Right cardiac atrium (tissue), 5 donors: ENCODE measurements at regions of chr12 and their contacts with region 1.

Region 1: DNA sequence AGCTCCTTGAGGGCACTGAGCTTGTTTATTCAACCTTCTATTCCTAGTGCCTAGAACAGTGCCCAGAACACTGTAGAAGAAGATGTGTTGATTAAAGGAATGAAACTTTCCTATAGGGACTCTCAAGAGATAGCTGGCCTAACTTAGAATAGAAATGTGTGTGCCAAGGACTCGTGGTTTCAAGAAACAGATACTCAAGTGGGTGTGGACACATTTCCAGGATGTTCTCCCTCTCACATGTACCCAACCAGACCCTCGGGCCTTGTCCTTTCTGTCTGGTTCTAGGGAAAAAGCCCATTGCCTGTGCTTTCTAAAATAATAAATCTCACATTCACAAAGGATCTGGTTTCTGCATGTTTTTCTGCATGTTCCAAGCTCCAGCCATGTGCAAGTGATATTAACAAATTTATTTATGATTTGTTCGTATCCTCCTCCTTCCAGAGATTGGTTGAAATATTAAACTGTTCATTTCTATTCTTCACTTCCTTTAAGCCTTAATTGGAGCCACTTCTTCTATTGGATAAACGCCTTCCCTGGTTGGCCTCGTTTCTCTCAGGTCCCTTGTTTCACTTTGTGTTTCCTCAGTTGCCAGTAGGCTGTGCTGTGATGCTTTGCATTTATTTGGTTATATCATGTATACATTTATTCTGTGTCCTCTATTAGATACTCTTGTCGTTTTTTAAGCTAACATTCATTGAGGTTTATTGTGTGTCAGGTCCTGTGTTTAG is 89.8 kb downstream of the CRADD start:
- DNase-seq: no peak
- ATAC-seq: peak; percentile 81 to 83
- H3K4me3 ChIP-seq: no peak overlapping the region
- H3K27ac ChIP-seq: peak overlapping the region; percentile 17
- H3K4me1 ChIP-seq: peaks cover 11% of the 10 kb centered on the region
- H3K27me3 ChIP-seq: no peaks in the 10 kb centered on the region

Region 2: DNA sequence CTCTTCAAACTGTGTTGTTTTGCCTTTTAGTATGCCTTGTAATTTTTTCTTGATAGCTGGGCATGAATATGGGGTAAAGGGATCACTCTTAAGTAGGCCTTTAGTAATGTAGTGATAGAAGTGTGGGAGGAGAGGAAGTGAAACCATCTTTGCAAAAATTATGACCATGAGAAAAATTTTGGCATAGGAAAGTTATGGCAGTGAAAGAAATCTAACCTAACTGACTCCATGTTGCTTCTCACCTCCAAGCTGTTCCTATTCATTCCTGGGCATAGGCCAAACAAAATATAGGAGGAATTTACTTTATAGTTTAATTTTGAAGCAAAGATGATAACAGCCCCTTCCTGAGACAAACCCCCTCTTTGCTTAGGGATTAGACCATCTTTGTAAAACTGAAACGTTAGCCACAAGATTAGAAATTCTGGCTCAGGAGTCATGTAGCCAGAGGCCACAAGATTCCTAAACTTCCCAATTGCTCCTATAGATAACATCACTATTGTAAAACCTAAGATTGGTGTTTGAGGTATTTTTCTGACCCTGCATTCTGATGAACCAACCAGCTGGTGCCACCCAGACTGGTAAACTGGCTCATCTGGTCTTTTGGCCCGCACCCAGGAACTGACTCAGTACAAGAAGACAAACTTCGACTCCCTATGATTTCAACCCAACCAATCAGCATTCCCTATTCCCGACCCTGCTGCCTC is 44.0 kb before region 1 on chr12:
- intact Hi-C with region 1: no loop called
- DNase-seq: peak in 1 of 3 donors; percentile 50
- ATAC-seq: no peak
- H3K4me3 ChIP-seq: no peak overlapping the region
- H3K27ac ChIP-seq: no peak overlapping the region
- H3K4me1 ChIP-seq: no peaks in the 10 kb centered on the region
- H3K27me3 ChIP-seq: no peaks in the 10 kb centered on the region

Region 3: DNA sequence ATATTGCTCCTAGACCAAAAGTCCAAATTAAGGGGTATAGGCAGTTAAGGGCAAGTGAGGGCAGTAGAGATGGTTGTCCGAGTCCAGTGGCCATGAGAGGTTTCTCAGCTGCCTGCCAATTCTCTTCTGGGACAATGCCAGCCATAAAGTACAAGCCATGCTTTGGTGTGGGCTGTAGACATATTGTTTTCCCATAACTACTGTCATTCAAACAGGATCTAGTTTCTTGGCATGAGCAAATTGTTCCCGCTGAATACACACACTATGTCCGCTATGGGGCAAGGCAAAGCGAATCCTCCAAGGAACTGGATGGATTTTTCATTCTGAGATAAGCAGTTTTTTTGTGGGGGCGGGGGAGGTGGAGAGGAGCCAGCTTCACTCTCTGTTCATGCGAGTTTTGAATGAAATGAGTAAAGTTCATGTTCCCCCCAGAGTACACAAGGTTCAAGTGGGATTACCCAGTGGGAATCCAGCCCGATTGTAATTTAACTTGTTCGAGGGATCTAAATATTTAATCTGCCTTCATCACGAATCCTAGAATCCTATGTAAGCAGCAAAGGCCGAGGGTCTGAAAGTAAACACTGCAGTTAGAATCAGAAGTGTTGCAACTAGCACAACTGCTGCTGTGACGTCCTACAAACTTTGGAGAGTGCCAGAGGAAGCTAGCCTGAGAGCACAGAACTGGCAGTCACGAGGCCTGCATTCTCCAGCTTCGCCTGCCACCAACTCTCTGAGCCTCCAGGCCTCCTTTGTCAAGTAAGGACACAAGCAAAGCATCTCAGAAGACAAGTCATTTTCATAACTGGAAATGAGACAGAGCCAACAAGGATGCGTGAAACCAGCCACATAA is 47.2 kb after region 1 on chr12:
- intact Hi-C with region 1: loop called in 1 of 4 experiments (anchors 5 kb)
- DNase-seq: peak; percentile 86 to 93 (median 91)
- ATAC-seq: peak; percentile 92 to 93
- H3K4me3 ChIP-seq: no peak overlapping the region
- H3K27ac ChIP-seq: peak overlapping the region; percentile 100
- H3K4me1 ChIP-seq: peaks cover 26% of the 10 kb centered on the region
- H3K27me3 ChIP-seq: no peaks in the 10 kb centered on the region

Region 4: DNA sequence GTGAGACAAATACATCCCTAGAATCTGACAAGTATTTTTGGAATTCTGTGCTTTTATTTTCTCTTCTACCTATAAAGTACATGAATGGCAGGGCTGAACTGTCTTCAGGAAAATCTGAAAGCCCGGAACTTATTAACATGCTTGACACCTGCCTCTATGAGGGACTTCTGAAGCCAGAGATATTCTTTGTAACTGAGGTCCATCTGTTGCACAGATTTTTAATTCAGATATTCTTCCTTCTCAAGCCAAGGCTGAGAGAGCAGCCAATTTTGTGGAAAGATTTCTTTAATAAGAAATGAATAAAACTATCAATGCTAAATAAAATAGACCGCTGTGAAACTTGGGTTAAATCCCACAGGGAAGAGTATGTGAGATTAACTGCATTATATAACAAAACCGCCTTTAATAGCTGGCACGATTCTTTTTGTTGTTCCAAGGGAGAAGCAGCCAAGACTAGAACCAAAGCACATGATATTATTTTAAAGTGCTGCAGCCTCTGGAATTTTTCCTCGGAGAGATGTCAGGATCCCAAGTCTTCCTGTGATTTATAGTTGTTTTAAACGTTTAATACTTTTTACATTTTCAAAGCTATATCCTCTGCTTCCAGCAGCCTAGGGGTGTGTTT is 59.1 kb after region 1 on chr12:
- intact Hi-C with region 1: no loop called
- DNase-seq: no peak
- ATAC-seq: peak; percentile 39 to 64
- H3K4me3 ChIP-seq: no peak overlapping the region
- H3K27ac ChIP-seq: peak overlapping the region; percentile 80
- H3K4me1 ChIP-seq: peaks cover 8% of the 10 kb centered on the region
- H3K27me3 ChIP-seq: no peaks in the 10 kb centered on the region

Region 5: DNA sequence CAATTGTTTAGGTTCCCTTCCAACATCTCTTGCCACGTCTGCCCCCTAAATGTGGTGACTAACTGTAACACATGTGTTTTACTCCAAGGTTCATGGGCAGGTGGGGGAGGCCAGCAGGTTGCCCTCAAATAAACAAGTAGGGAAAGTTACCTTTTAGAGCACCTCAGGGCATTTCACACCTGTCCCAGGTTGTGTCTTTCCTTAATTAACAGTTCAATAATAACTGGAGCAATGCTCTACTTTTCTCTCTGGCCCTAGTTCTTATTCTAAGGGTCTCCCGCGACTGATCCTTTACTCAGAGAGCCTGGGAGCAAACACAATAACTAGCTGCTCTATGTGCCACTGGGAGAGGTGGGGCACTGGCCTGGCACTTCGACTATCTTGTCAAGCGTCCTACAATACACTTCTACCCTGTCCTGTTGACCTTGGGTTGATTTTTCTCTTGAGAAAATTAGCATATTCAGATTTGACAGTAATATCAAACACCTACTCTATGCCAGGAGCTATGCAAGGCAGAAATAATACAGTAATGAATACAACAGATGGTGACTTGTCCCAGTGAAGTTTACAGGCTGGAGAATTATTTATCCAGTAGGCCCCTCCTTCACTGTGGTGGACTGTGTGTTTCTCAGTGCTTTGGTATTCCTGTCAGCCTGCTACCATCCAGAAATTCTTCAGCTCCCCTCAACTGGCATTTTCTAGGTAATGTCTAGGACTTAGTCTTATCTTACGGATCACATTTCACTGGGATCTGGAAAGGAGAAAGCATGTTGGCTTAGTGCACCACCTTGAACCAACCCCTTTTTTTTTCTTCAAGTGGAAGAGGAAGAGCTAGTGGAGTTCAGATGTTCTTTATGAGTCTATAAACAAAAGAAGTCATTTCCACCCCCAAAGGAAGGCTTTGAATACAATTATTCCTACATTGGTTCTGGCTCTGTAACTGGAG is 112.8 kb after region 1 on chr12:
- intact Hi-C with region 1: loop called in 1 of 4 experiments (anchors 10 kb)
- DNase-seq: no peak
- ATAC-seq: peak; percentile 47 to 52
- H3K4me3 ChIP-seq: no peak overlapping the region
- H3K27ac ChIP-seq: no peak overlapping the region
- H3K4me1 ChIP-seq: peaks cover 4% of the 10 kb centered on the region
- H3K27me3 ChIP-seq: no peaks in the 10 kb centered on the region

Region 6: GRCh38 chr12:93979189-93979588 is 212.2 kb after region 1 on chr12:
- intact Hi-C with region 1: loop called in 1 of 4 experiments (anchors 5 kb)
- DNase-seq: no peak
- ATAC-seq: no peak
- H3K4me3 ChIP-seq: no peak overlapping the region
- H3K27ac ChIP-seq: peak overlapping the region; percentile 45
- H3K4me1 ChIP-seq: peaks cover 18% of the 10 kb centered on the region
- H3K27me3 ChIP-seq: no peaks in the 10 kb centered on the region

Region 7: DNA sequence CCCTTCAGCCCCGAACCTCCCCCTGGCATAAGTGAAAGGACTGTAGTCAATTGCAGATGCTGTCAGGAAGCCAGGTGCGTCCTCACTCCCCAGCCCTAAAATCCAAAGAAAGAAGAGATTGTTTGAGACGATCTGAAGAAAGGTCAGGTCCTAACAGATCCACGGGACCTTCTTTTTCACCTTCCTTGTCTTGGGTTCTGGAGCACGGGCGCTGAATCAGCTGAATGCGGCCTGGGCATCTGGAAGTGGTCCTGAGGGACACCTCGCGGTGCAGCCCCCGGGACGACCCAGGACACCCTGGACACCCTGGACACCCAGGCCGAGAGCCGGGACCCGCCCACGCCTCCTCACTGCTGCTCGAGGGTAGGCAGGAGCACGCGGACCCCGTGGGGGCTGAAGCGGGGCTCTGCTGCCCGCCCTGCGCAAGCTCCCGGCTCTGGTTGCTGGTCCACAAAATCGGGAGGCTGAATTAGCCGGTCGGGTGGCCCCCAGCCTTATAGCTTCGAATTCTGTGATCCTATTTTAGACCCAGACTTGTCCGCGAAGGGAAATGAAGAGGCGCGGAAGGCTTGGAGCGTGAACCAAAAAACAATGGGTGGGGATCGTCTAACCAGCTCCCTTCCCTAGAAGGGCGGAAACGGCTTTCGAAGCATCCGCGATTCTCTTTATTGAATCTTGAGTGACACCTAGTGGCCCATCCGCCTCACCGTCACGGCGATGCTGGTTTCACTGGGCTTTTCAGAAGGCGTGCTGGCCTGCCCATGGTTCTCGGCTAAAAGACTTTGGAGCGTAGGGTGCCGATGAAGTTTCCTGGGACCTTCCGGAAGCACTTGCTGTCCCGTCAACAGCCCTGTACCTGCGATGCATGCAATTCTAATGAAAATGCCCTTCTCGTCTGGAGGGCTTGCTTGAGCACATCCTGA is 335.0 kb after region 1 on chr12:
- intact Hi-C with region 1: loop called in 3 of 4 experiments (anchors 5 to 10 kb)
- DNase-seq: peak; percentile 87 to 95 (median 91)
- ATAC-seq: peak; percentile 91
- H3K4me3 ChIP-seq: peak overlapping the region; percentile 50
- H3K27ac ChIP-seq: no peak overlapping the region
- H3K4me1 ChIP-seq: peaks cover 3% of the 10 kb centered on the region
- H3K27me3 ChIP-seq: no peaks in the 10 kb centered on the region